ENCODE measurements at regions of chr11 and their contacts with region 1.

Region 1: DNA sequence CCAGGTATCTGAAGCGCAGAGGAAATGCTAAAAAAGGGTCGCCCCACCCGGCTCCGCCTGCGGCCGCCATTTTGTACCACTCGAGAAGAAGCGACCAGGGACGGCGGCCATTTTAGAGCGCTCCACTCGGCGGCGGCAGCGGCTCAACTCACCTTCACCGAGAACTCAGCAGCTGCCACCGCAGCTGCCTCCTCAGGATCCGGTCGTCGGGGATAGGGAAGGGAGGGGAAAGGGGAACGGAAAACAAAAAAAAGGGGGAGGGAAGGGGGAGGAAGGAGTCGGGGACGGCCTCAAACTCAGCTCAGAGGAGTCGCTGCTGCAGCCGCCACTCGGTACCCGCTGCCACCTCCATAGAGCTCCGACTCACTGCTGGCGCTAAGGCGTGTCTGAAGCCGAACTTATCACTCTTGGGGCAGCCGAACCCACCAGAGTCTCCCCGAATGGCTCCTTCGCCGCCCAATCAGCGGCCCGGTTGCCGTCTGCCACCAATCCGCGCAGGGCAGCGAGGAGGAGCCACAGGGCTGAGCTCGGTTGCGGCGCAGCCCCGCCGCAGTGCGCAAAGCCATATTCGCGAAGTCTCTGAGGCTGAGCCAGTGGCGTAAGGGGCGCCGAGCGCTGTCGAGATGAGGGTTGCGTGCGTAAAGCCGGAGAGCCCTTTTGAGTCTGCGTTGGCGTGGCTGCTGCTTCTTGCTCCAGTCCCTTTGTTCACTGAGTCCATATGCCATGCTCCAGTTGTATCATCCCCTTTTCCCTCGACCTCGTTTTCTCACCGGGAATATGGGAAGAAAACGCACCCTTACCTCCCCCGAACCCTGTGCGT is at the start of gene EIF4G2:
- DNase-seq: peak; percentile 97
- H3K4me3 ChIP-seq: peak within 1 kb of the TSS; percentile 75 to 93
- H3K27ac ChIP-seq: peak within 1 kb of the TSS; percentile 95 to 98
- H3K4me1 ChIP-seq: peaks cover 17 to 27% of the 10 kb centered on the region in 2 experiments
- H3K27me3 ChIP-seq: no peaks in the 10 kb centered on the region
- CTCF ChIP-seq: no peak
- EP300 ChIP-seq: no peak; a peak in 1 of 4 replicates
- RAD21 ChIP-seq: no peak; the same call in 1 of the 2 replicates
- polyA plus RNA-seq, gene EIF4G2: 298 and 394 TPM in 2 replicates

Region 2: DNA sequence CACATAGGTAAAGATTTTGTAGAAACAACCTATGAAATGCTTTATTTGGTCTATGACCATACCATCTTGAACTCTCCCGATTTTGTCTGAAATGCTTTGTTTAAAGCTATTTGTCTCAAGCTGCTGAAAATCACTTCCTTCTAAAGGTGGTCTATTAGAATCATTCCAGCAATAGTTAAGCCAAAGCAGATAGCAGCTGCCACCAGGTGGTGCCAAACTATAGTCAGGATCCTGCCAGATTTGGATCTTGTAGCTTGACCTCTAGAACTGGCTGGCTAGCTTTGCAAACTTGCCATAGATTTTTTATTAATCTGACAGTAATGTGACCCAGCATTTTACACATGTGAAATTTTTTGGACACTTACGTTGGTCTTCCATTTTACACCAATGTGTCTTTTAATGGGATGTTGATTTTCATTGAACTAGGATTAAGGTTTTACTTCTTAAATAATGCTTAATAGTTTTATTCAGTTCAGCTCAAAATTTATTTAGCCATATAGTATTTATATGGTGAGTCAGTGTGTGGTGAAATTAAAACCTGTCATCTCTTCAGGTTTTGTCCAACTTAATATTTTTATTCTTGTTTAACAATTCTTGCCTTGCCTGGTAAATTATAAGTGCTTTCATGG is 38.0 kb before region 1 on chr11:
- CTCF ChIA-PET with region 1: interaction called, 30 read pairs
- POLR2A ChIA-PET with region 1: interaction called, 19 read pairs
- DNase-seq: peak; percentile 49
- H3K4me3 ChIP-seq: no peak overlapping the region
- H3K27ac ChIP-seq: peak overlapping the region in 1 of 2 experiments; percentile 28; a peak in 2 of 4 replicates
- H3K4me1 ChIP-seq: peaks cover 0 to 8% of the 10 kb centered on the region in 2 experiments; a peak in 2 of 4 replicates
- H3K27me3 ChIP-seq: no peaks in the 10 kb centered on the region
- CTCF ChIP-seq: peak; percentile 87
- EP300 ChIP-seq: no peak
- RAD21 ChIP-seq: peak; percentile 74

Region 3: GRCh38 chr11:10784232-10785145 is 24.3 kb before region 1 on chr11:
- CTCF ChIA-PET with region 1: interaction called, 9 read pairs
- POLR2A ChIA-PET with region 1: interaction called, 10 read pairs
- DNase-seq: peak; percentile 37
- H3K4me3 ChIP-seq: no peak overlapping the region
- H3K27ac ChIP-seq: peak overlapping the region; percentile 12 to 56; a peak in 3 of 4 replicates
- H3K4me1 ChIP-seq: peaks cover 8 to 14% of the 10 kb centered on the region in 2 experiments; a peak in 3 of 4 replicates
- H3K27me3 ChIP-seq: no peaks in the 10 kb centered on the region
- CTCF ChIP-seq: no peak
- EP300 ChIP-seq: no peak
- RAD21 ChIP-seq: no peak

Region 4: DNA sequence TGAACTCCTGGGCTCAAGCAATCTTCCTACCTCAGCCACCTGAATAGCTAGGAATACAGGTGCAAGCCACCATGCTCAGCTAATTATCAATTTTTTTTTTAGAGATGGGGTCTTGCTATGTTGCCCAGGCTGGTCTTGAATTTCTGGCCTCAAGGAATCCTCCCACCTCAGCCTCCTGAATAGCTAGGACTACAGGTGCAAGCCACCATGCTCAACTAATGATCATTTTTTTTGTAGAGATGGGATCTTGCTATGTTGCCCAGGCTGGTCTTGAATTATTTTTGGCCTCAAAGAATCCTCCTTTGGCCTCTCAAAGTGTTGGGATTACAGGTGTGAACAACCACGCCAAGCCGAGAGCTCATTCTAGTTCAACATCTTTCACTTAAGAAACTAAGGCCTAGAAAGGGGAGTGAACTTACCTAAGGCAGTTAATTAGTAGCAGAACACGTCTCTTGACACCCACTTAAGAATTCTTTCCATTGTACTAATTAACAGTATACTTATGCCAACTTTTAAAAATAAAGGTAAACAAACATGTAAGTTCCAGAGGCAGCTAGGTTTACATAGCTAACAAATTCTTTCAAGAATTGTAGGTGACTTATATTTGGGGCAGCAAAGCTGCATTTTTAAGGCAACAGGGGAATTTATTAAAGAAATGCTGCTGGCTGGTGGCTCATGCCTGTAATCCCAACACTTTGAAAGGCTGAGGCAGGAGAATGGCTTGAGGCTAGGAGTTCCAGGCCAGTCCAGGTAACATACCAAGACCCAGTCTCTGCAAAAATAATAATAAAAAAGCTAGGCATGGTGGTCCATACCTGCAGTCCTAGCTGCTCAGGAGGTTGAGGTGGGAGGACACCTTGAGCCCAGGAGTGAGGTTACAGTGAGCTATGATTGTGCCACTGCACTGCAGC is 39.5 kb after region 1 on chr11:
- CTCF ChIA-PET with region 1: interaction called, 4 read pairs
- POLR2A ChIA-PET with region 1: interaction called, 16 read pairs
- DNase-seq: no peak
- H3K4me3 ChIP-seq: no peak overlapping the region
- H3K27ac ChIP-seq: no peak overlapping the region
- H3K4me1 ChIP-seq: no peaks in the 10 kb centered on the region
- H3K27me3 ChIP-seq: no peaks in the 10 kb centered on the region
- CTCF ChIP-seq: no peak
- EP300 ChIP-seq: no peak
- RAD21 ChIP-seq: no peak

Region 5: GRCh38 chr11:10899121-10899830 is 90.5 kb after region 1 on chr11:
- CTCF ChIA-PET with region 1: no interaction called
- POLR2A ChIA-PET with region 1: no interaction called
- DNase-seq: peak; percentile 40
- H3K4me3 ChIP-seq: 0 out of 4 replicates have a peak overlapping the region, but pooled peaks of 1 of the 2 experiments have one; percentile 30
- H3K27ac ChIP-seq: peak overlapping the region; percentile 86 to 99
- H3K4me1 ChIP-seq: peaks cover 21 to 29% of the 10 kb centered on the region in 2 experiments; a peak in 3 of 4 replicates
- H3K27me3 ChIP-seq: no peaks in the 10 kb centered on the region
- CTCF ChIP-seq: no peak
- EP300 ChIP-seq: no peak
- RAD21 ChIP-seq: no peak